Calu3 (cell line): ENCODE measurements at regions of chr4 and their contacts with region 1.

Region 1: DNA sequence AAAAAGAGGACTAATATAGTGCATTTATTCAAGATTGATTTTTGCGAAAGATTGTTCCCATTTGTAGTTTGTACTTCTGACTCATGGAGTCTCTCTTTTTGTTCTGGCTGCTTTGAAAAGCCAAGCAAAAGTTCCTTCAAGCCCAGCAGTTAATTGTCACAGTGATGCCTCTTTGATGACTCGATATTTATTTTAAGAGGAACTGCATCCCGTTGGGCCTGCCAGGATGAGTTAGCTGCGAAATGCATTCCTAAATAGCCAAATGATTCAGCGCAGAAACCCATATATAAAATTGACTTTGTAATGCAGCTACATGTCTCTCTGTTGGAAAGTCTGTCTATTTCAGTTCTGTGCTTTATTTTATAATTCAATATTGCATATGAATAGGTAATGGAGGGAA is 295.1 kb downstream of the GBA3 start:
- DNase-seq: no peak
- H3K4me3 Mint-ChIP-seq: no peak overlapping the region
- H3K27ac Mint-ChIP-seq: no peak overlapping the region
- H3K4me1 Mint-ChIP-seq: peaks cover 25% of the 10 kb centered on the region
- H3K27me3 Mint-ChIP-seq: no peaks in the 10 kb centered on the region
- CTCF ChIP-seq: no peak

Region 2: GRCh38 chr4:22969314-22969896 is 18.5 kb before region 1 on chr4:
- CTCF ChIA-PET with region 1: interaction called, 10 read pairs
- intact Hi-C with region 1: no loop called
- DNase-seq: peak; percentile 19
- H3K4me3 Mint-ChIP-seq: no peak overlapping the region
- H3K27ac Mint-ChIP-seq: peak overlapping the region; percentile 90
- H3K4me1 Mint-ChIP-seq: peaks cover 26% of the 10 kb centered on the region
- H3K27me3 Mint-ChIP-seq: no peaks in the 10 kb centered on the region
- CTCF ChIP-seq: no peak

Region 3: GRCh38 chr4:23324021-23324690 is 336.3 kb after region 1 on chr4:
- CTCF ChIA-PET with region 1: no interaction called
- intact Hi-C with region 1: no loop called
- DNase-seq: no peak
- H3K4me3 Mint-ChIP-seq: no peak overlapping the region
- H3K27ac Mint-ChIP-seq: no peak overlapping the region
- H3K4me1 Mint-ChIP-seq: peaks cover 19% of the 10 kb centered on the region
- H3K27me3 Mint-ChIP-seq: no peaks in the 10 kb centered on the region
- CTCF ChIP-seq: no peak